Thyroid gland (tissue), 4 donors: ENCODE measurements at regions of chr10 and their contacts with region 1.

Region 1: GRCh38 chr10:115355162-115355760 is 262.1 kb downstream of the ATRNL1 start:
- DNase-seq: peak; percentile 9 to 16
- H3K4me3 ChIP-seq: no peak overlapping the region
- H3K27ac ChIP-seq: no peak overlapping the region
- H3K4me1 ChIP-seq: no peaks in the 10 kb centered on the region
- H3K27me3 ChIP-seq: no peaks in the 10 kb centered on the region
- CTCF ChIP-seq: peak; percentile 7 to 62 (median 52)
- POLR2A ChIP-seq: no peak

Region 2: GRCh38 chr10:116385994-116386809 is 1030.9 kb after region 1 on chr10:
- intact Hi-C with region 1: loop called (anchors 10 kb)
- DNase-seq: no peak
- H3K4me3 ChIP-seq: no peak overlapping the region
- H3K27ac ChIP-seq: no peak overlapping the region
- H3K4me1 ChIP-seq: no peaks in the 10 kb centered on the region
- H3K27me3 ChIP-seq: no peaks in the 10 kb centered on the region
- CTCF ChIP-seq: peak in 5 of 6 experiments; percentile 17 to 61 (median 51)
- POLR2A ChIP-seq: no peak